Heart left ventricle (tissue), 16 donors: ENCODE measurements at regions of chr10 and their contacts with region 1.

Region 1: GRCh38 chr10:73743905-73744663 is at the start of gene SEC24C:
- DNase-seq: peak; percentile 97 to 98 (median 97)
- ATAC-seq: peak; percentile 95 to 98 (median 96)
- H3K4me3 ChIP-seq: peak within 1 kb of the TSS; percentile 66 to 98 (median 82)
- H3K27ac ChIP-seq: peak within 1 kb of the TSS; percentile 86 to 98 (median 92)
- H3K4me1 ChIP-seq: peaks cover 0 to 47% (median 36%) of the 10 kb centered on the region in 12 donors
- H3K27me3 ChIP-seq: no peaks in the 10 kb centered on the region
- CTCF ChIP-seq: no peak
- POLR2A ChIP-seq: peak in 1 of 2 donors; percentile 60
- total RNA-seq, gene SEC24C: 42.8 to 65.5 (median 49.5) TPM

Region 2: GRCh38 chr10:73781879-73782744 is 38.0 kb after region 1 on chr10 and contains the start of gene CHCHD1:
- intact Hi-C with region 1: loop called in 1 of 10 experiments (anchors 5 kb)
- DNase-seq: peak; percentile 92 to 97 (median 94)
- ATAC-seq: peak; percentile 60 to 84 (median 79)
- H3K4me3 ChIP-seq: peak within 1 kb of the TSS; percentile 70 to 99 (median 92)
- H3K27ac ChIP-seq: peak within 1 kb of the TSS; percentile 75 to 97 (median 93)
- H3K4me1 ChIP-seq: peaks cover 6 to 53% (median 42%) of the 10 kb centered on the region in 12 donors
- H3K27me3 ChIP-seq: no peaks in the 10 kb centered on the region
- CTCF ChIP-seq: peak in 1 of 12 donors; percentile 4
- POLR2A ChIP-seq: peak in 1 of 2 donors; percentile 66
- total RNA-seq, gene CHCHD1: 17.3 to 39.8 (median 22.7) TPM

Region 3: DNA sequence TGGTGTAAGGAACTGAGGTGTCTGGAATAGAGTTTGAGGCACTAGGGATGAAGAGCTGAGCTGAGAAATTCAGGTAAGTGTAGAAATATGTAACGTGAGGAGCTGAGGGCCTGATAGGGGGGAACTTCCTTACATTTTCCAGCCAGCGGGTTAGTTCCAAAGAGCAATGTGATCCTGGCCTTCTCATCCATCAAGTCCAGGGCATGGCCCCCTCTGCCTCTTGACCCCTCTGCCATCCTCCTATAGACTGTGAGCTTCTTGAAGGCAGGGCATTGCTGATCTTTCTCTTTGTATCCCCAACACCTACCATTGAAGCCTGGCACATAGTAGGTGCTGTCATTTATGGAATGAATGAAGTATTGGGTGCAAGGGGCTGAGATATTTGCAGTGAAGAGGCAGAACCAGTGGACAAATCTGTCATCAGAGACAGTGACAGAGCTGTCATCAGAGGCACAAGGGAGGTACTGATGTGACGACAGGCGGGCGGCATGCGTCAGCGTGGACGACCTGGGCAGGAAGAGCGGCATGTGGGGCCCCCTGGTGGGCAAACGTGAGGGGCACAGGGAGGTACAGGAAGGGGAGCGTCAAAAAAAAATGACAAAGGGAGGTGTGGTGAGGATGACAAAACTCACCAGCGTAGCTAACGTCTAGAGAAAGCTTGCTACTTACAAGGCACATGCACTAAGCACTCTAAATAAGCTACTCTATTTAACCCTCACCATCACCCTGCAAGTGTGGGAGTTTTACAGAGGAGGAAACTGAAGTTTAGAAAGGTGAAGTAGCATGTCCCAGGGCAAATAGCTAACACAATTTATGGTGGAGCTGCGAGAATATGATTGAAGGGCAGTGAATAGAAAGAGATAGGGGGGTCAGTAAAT is 135.5 kb after region 1 on chr10:
- intact Hi-C with region 1: no loop called
- DNase-seq: peak; percentile 84 to 94 (median 89)
- ATAC-seq: peak; percentile 79 to 96 (median 92)
- H3K4me3 ChIP-seq: peak overlapping the region in 1 of 12 donors; percentile 1
- H3K27ac ChIP-seq: peak overlapping the region in 1 of 12 donors; percentile 6
- H3K4me1 ChIP-seq: peaks cover 0 to 21% (median 9%) of the 10 kb centered on the region in 12 donors
- H3K27me3 ChIP-seq: no peaks in the 10 kb centered on the region
- CTCF ChIP-seq: peak; percentile 88 to 98 (median 93)
- POLR2A ChIP-seq: no peak